K562 (cell line): ENCODE measurements at regions of chr15 and their contacts with region 1.

Region 1: DNA sequence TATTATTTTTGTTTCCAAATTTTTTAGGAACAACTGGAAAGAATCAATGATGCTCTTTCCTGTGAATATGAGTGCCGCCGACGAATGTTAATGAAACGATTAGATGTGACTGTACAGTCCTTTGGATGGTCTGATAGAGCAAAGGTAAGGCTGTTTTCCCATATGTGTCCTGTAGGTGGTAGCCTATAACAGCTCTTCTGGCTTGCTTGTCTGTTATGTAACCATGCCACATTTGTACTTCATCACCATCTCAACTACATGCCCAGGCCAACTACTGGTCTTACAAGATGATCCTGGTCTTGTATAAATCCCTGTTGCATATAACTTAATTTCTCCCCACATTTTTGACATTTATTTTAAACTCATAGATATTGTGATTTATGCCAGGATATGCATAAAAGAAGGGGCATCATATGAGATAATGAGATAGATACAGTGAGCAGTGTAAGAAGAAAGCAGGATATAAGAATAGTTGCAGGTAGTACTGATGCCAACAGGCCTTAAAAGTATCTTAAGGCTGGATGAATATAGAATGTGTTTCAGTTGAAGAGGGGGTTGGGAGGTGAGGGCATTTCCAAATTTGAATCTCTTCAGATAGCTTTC is 20.3 kb downstream of the FAM98B start:
- DNase-seq: peak; percentile 35 to 58 (median 48)
- ATAC-seq: peak; percentile 92
- H3K4me3 ChIP-seq: no peak overlapping the region
- H3K27ac ChIP-seq: no peak overlapping the region
- H3K4me1 ChIP-seq: no peaks in the 10 kb centered on the region
- H3K27me3 ChIP-seq: no peaks in the 10 kb centered on the region
- CTCF ChIP-seq: peak; percentile 48 to 70 (median 69)
- EP300 ChIP-seq: no peak
- POLR2A ChIP-seq: no peak
- RAD21 ChIP-seq: peak; percentile 83 to 85

Region 2: GRCh38 chr15:38624244-38625205 is 150.3 kb after region 1 on chr15:
- CTCF ChIA-PET with region 1: no interaction called
- POLR2A ChIA-PET with region 1: no interaction called
- in situ Hi-C with region 1: no loop called
- intact Hi-C with region 1: loop called (anchors 1 kb)
- DNase-seq: no peak
- ATAC-seq: no peak
- H3K4me3 ChIP-seq: no peak overlapping the region
- H3K27ac ChIP-seq: no peak overlapping the region
- H3K4me1 ChIP-seq: peaks cover 0 to 2% of the 10 kb centered on the region in 2 experiments; a peak in 2 of 5 replicates
- H3K27me3 ChIP-seq: peaks cover 0 to 4% of the 10 kb centered on the region in 2 experiments; a peak in 3 of 5 replicates
- CTCF ChIP-seq: no peak
- EP300 ChIP-seq: no peak
- POLR2A ChIP-seq: no peak
- RAD21 ChIP-seq: no peak

Region 3: GRCh38 chr15:38683382-38684242 is 209.4 kb after region 1 on chr15:
- CTCF ChIA-PET with region 1: interaction called, 6 read pairs
- POLR2A ChIA-PET with region 1: no interaction called
- in situ Hi-C with region 1: no loop called
- intact Hi-C with region 1: loop called (anchors 1 kb)
- DNase-seq: peak; percentile 28 to 62 (median 32)
- ATAC-seq: peak; percentile 88
- H3K4me3 ChIP-seq: no peak overlapping the region
- H3K27ac ChIP-seq: no peak overlapping the region
- H3K4me1 ChIP-seq: no peaks in the 10 kb centered on the region
- H3K27me3 ChIP-seq: peaks cover 0 to 2% of the 10 kb centered on the region in 2 experiments; a peak in 1 of 5 replicates
- CTCF ChIP-seq: peak; percentile 63 to 72 (median 65); a peak in 5 of 6 replicates
- EP300 ChIP-seq: no peak
- POLR2A ChIP-seq: no peak
- RAD21 ChIP-seq: peak; percentile 75 to 80

Region 4: DNA sequence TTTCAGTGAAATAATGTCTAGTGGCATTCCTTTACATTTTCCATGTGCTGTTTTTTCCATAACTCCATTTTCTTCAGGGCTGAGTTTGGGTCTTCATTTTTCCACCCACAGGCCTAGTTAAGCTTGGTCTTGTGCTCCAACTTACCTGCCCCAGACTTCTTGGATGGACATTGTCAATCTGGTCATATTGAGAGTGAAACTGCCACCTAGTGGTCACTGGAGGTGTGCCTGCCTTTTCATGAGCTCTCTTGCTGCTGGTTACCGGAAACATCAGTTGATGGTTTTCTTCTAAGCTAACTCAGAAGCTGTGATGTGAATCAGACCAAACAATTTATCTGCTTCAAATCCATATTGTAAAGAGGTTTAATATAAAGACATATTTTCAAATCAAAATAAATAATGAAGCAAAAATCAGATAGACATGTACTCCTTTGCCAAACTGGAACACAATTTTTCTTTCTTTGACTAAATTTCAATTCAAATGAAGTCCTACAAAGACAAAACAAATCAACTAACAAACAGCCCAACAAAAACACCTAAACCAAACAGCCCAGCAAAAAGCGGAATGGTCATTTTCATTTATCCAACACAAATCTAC is 225.5 kb after region 1 on chr15:
- CTCF ChIA-PET with region 1: interaction called, 6 read pairs
- POLR2A ChIA-PET with region 1: no interaction called
- in situ Hi-C with region 1: loop called (anchors 10 kb)
- intact Hi-C with region 1: no loop called
- DNase-seq: peak; percentile 68 to 79 (median 74)
- ATAC-seq: peak; percentile 94
- H3K4me3 ChIP-seq: no peak overlapping the region
- H3K27ac ChIP-seq: no peak overlapping the region
- H3K4me1 ChIP-seq: no peaks in the 10 kb centered on the region
- H3K27me3 ChIP-seq: peaks cover 0 to 8% of the 10 kb centered on the region in 2 experiments; a peak in 3 of 5 replicates
- CTCF ChIP-seq: peak; percentile 56 to 86 (median 74)
- EP300 ChIP-seq: no peak
- POLR2A ChIP-seq: no peak
- RAD21 ChIP-seq: peak; percentile 34 to 68